Heart right ventricle (tissue), 16 donors: ENCODE measurements at regions of chr13 and their contacts with region 1.

Region 1: DNA sequence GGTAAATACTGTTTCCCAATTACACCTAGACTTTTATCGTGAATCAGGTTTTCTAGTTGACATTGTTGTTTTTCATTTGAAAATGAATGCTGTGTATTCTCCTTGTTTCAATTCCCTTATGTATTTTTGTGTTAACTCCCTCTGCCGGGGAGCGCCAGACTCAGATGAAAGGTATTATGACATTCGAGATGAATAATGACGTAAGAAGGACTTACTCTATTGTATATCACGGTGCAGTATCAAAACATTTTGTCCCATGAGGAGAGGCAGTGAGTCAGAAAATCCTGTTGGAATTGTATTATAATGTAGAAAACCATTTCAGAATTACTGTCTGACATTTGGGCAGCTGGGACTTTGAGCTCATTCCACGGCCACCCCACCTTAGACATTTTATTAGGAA is 61.6 kb downstream of the LRCH1 start:
- DNase-seq: no peak
- ATAC-seq: peak in 4 of 8 donors; percentile 41 to 74 (median 55)
- H3K4me3 ChIP-seq: no peak overlapping the region
- H3K27ac ChIP-seq: peak overlapping the region in 4 of 10 donors; percentile 56 to 82 (median 70)
- H3K4me1 ChIP-seq: peaks cover 2 to 70% (median 39%) of the 10 kb centered on the region in 9 donors
- H3K27me3 ChIP-seq: no peaks in the 10 kb centered on the region
- CTCF ChIP-seq: peak in 3 of 9 donors; percentile 16 to 34 (median 21)

Region 2: GRCh38 chr13:46679369-46680120 is 65.0 kb after region 1 on chr13:
- intact Hi-C with region 1: loop called in 3 of 10 experiments (anchors 5 to 10 kb)
- DNase-seq: peak in 1 of 2 donors; percentile 60
- ATAC-seq: peak; percentile 71 to 89 (median 84)
- H3K4me3 ChIP-seq: peak overlapping the region in 7 of 10 donors; percentile 16 to 46 (median 43)
- H3K27ac ChIP-seq: peak overlapping the region in 9 of 10 donors; percentile 0 to 80 (median 70)
- H3K4me1 ChIP-seq: peaks cover 0 to 76% (median 57%) of the 10 kb centered on the region in 9 donors
- H3K27me3 ChIP-seq: no peaks in the 10 kb centered on the region
- CTCF ChIP-seq: peak in 5 of 9 donors; percentile 20 to 55 (median 29)